RWPE1 (cell line): ENCODE measurements at regions of chr10 and their contacts with region 1.

Region 1: GRCh38 chr10:31864834-31865518 is 63.7 kb downstream of the ARHGAP12 start:
- DNase-seq: no peak
- H3K27ac ChIP-seq: no peak overlapping the region
- CTCF ChIP-seq: no peak

Region 2: GRCh38 chr10:31739711-31740110 is 125.3 kb before region 1 on chr10:
- CTCF ChIA-PET with region 1: no interaction called
- POLR2A ChIA-PET with region 1: no interaction called
- DNase-seq: no peak
- H3K27ac ChIP-seq: no peak overlapping the region
- CTCF ChIP-seq: no peak

Region 3: DNA sequence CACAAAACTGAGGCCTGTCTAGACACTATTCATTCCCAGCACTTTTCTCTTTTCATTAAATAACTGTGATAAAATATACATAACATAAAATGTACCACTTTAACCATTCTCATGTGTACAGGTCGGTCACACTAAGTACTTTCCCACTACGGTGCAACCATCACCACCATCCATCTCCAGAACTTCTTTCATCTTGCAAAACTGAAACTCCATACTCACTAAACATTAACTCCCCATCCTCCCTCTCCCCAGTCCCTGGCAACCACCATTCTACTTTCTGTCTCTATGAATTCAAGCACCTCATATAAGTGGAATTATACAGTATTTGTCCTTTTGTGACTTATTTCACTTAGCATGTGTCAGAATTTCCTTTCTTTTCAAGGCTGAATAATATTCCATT is 10.6 kb after region 1 on chr10:
- CTCF ChIA-PET with region 1: no interaction called
- POLR2A ChIA-PET with region 1: no interaction called
- DNase-seq: no peak
- H3K27ac ChIP-seq: no peak overlapping the region
- CTCF ChIP-seq: no peak

Region 4: GRCh38 chr10:31888442-31888841 is 23.5 kb after region 1 on chr10:
- CTCF ChIA-PET with region 1: no interaction called
- POLR2A ChIA-PET with region 1: no interaction called
- DNase-seq: no peak
- H3K27ac ChIP-seq: 0 out of 2 replicates have a peak overlapping the region, but pooled peaks have one; percentile 38
- CTCF ChIP-seq: no peak

Region 5: GRCh38 chr10:31947144-31947926 is 82.4 kb after region 1 on chr10:
- CTCF ChIA-PET with region 1: interaction called, 10 read pairs
- POLR2A ChIA-PET with region 1: no interaction called
- DNase-seq: peak; percentile 83
- H3K27ac ChIP-seq: peak overlapping the region; percentile 72
- CTCF ChIP-seq: peak; percentile 69

Region 6: GRCh38 chr10:31977440-31978155 is 112.6 kb after region 1 on chr10:
- CTCF ChIA-PET with region 1: no interaction called
- POLR2A ChIA-PET with region 1: no interaction called
- DNase-seq: no peak
- H3K27ac ChIP-seq: no peak overlapping the region
- CTCF ChIP-seq: no peak

Region 7: GRCh38 chr10:32005050-32005449 is 140.1 kb after region 1 on chr10:
- CTCF ChIA-PET with region 1: interaction called, 11 read pairs
- POLR2A ChIA-PET with region 1: no interaction called
- DNase-seq: peak; percentile 30
- H3K27ac ChIP-seq: no peak overlapping the region
- CTCF ChIP-seq: peak; percentile 39